Activated CD8-positive, alpha-beta T cell treated with anti-CD3 and anti-CD28 coated beads, Interleukin-2, amount 10 ng/mL, durations not matched to agents 7 days and 5 days (primary cell): ENCODE measurements at regions of chr14 and their contacts with region 1.

Region 1: DNA sequence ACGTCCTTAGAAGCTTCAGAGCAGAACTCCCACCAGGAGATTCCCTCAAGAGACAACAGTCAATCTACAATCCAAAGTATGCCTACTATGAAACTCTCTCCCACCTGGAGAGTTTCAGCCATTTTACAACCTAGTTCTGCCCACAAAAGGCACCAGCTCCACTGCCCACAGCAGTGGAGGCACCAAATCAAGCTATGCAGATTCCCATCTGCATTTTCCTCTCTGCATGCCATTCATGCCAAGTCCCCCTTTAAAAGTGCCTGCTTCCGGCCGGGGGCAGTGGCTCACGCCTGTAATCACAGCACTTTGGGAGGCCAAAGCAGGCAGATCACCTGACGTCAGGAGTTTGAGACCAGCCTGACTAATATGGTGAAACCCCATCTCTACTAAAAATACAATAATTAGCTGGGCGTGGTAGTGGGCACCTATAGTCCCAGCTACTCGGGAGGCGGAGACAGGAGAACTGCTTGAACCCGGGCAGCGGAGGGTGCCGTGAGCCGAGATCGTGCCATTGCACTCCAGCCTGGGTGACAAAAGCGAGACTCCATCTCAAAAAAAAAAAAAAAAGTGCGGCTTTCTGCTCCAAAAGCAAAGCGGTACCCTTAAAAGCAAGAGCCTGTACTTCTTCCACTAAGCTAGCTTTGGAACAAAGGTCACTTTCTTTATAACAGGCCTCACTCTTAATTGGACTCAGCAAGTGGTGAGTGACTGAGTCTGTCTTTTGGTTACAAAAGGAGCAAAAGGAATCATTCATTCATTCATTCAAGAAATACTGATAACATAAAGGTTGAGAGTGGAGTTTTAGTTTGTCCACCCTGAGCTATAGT is 10.1 kb upstream of the DLGAP5 start:
- DNase-seq: no peak
- ATAC-seq: no peak
- H3K4me3 Mint-ChIP-seq: no peak overlapping the region
- H3K27ac Mint-ChIP-seq: no peak overlapping the region
- H3K4me1 Mint-ChIP-seq: no peaks in the 10 kb centered on the region
- H3K27me3 Mint-ChIP-seq: peaks cover 12% of the 10 kb centered on the region

Region 2: DNA sequence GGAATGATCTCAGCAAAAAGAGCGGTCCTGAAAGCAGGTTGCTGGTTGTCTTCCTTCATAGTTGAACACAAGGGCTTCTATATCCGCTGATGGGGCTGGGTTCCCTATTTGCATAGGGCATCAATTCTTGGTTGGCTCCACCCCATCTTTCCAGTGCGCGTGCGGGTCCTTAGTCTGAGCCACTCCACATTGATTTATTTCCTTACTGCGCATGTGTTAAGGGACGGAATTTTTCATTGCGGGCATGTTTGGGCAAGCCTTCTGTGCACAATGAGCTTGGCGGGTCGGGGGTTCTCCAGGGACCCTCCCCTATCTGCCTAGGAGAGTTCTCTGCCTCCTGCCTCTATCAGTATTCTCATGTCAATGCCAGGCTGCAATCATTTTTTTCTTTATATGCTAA is 11.2 kb after region 1 on chr14:
- CTCF ChIA-PET with region 1: interaction called, 16 read pairs
- POLR2A ChIA-PET with region 1: no interaction called
- DNase-seq: no peak
- ATAC-seq: no peak
- H3K4me3 Mint-ChIP-seq: no peak overlapping the region
- H3K27ac Mint-ChIP-seq: no peak overlapping the region
- H3K4me1 Mint-ChIP-seq: peaks cover 3% of the 10 kb centered on the region
- H3K27me3 Mint-ChIP-seq: peaks cover 4% of the 10 kb centered on the region

Region 3: DNA sequence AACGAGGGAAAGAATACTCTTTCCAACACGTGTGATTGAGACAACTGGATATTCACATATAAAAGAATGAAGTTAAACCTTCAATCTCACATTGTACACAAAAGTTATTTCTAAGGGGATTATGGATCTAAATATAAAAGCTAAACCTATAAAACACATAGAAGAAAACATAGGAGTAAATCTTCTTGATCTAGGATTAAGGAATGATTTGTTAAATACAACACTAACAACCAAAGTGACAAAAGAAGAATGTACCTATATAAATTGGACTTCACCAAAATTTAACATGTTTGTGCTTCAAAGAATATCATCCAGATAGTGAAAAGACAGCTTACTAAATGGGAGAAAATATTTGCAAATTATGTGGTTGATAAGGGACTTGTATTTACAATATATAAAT is 26.8 kb after region 1 on chr14:
- CTCF ChIA-PET with region 1: no interaction called
- POLR2A ChIA-PET with region 1: no interaction called
- DNase-seq: no peak
- ATAC-seq: no peak
- H3K4me3 Mint-ChIP-seq: no peak overlapping the region
- H3K27ac Mint-ChIP-seq: no peak overlapping the region
- H3K4me1 Mint-ChIP-seq: no peaks in the 10 kb centered on the region
- H3K27me3 Mint-ChIP-seq: peaks cover 11% of the 10 kb centered on the region